Activated naive CD4-positive, alpha-beta T cell treated with anti-CD3 and anti-CD28 coated beads for 36 hours (primary cell): ENCODE measurements at regions of chr5 and their contacts with region 1.

Region 1: DNA sequence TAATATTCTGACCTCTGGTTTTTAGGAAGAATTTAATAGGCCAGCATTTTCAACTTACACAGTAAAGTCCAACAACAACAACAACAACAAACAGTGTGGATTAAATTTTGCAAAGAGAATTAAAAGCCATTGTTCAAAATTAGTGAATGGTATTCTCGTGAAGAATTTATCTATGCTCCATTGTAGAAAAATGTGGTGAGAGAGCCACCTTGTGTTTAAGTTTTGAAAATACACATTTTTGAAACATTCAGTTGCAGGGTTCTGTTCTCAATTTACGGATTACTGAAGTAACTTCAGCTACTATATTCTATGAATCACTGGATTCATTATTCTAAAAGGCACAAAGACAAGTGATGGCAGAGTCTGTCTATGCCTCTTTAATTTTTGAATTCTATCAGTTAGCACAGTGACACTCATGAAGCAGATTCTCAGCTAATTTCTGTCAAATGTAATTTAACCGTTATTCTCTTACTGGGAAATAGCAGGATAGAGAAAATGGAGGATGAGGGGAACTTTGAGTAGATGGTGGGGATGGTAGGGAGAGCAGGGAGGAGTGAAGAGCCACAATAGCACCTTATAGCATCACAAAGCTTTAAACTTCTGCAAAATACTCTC is 11.0 kb downstream of the CCDC152 start:
- DNase-seq: no peak
- H3K4me3 Mint-ChIP-seq: no peak overlapping the region
- H3K27ac Mint-ChIP-seq: no peak overlapping the region
- H3K4me1 Mint-ChIP-seq: no peaks in the 10 kb centered on the region
- H3K27me3 Mint-ChIP-seq: peaks cover 7% of the 10 kb centered on the region

Region 2: GRCh38 chr5:42005561-42006153 is 761.9 kb before region 1 on chr5:
- CTCF ChIA-PET with region 1: no interaction called
- intact Hi-C with region 1: loop called (anchors 5 kb)
- DNase-seq: no peak
- H3K4me3 Mint-ChIP-seq: no peak overlapping the region
- H3K27ac Mint-ChIP-seq: no peak overlapping the region
- H3K4me1 Mint-ChIP-seq: no peaks in the 10 kb centered on the region
- H3K27me3 Mint-ChIP-seq: peaks cover 2% of the 10 kb centered on the region

Region 3: DNA sequence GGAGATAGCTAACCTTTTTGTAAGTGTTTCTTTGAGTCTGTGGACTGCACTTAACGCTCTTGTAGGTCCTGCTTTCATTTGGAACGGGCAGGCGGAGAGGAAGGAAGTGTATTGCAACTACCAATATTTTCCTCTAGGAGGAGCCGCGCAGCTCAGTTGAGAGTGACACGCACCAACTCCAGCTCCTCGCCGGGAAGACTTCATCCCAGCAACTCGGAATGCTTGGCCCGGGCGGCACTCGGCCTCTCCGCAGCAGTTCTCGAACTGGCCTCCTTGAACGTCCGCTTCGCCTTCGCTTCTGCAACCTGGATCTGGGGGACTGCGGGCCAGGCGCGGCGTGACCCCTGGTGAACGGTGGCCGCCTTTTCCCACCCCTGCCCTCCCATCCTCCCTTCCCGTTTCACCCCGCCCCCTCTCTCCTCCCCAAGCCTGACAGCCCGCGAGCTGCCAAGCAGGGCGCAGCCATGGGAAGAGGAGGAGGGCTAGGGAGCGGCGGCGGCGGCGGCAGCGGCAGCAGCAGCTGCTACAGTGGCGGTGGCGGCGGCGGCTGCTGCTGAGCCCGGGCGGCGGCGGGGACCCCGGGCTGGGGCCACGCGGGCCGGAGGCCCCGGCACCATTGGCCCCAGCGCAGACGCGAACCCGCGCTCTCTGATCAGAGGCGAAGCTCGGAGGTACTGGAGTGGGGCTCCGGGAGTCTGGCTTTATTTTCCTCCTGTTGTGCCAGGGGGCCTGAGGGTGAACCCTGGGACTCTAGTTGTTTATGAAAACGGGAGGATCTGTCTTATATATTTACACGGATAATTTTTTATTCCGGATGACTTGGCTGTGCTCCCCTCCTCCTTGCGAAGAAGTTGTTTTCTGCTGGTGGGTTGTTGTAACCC is 344.1 kb before region 1 on chr5 and contains the start of gene GHR:
- CTCF ChIA-PET with region 1: interaction called, 8 read pairs
- intact Hi-C with region 1: loop called (anchors 2 kb)
- DNase-seq: peak; percentile 40
- H3K4me3 Mint-ChIP-seq: no peak within 1 kb of the TSS
- H3K27ac Mint-ChIP-seq: no peak within 1 kb of the TSS
- H3K4me1 Mint-ChIP-seq: no peaks in the 10 kb centered on the region
- H3K27me3 Mint-ChIP-seq: peaks cover 22% of the 10 kb centered on the region
- total RNA-seq, gene GHR: not detected

Region 4: GRCh38 chr5:42514754-42515153 is 252.8 kb before region 1 on chr5:
- CTCF ChIA-PET with region 1: interaction called, 4 read pairs
- intact Hi-C with region 1: loop called (anchors 5 kb)
- DNase-seq: no peak
- H3K4me3 Mint-ChIP-seq: no peak overlapping the region
- H3K27ac Mint-ChIP-seq: no peak overlapping the region
- H3K4me1 Mint-ChIP-seq: no peaks in the 10 kb centered on the region
- H3K27me3 Mint-ChIP-seq: no peaks in the 10 kb centered on the region

Region 5: GRCh38 chr5:42870882-42871418 is 103.4 kb after region 1 on chr5:
- CTCF ChIA-PET with region 1: no interaction called
- intact Hi-C with region 1: no loop called
- DNase-seq: no peak
- H3K4me3 Mint-ChIP-seq: no peak overlapping the region
- H3K27ac Mint-ChIP-seq: no peak overlapping the region
- H3K4me1 Mint-ChIP-seq: peaks cover 2% of the 10 kb centered on the region
- H3K27me3 Mint-ChIP-seq: peaks cover 3% of the 10 kb centered on the region